MCF 10A (cell line): ENCODE measurements at regions of chr11 and their contacts with region 1.

Region 1: GRCh38 chr11:86511086-86511551 is 136.4 kb downstream of the CCDC81 start:
- DNase-seq: peak; percentile 74
- H3K4me3 Mint-ChIP-seq: no peak overlapping the region
- H3K27ac Mint-ChIP-seq: no peak overlapping the region
- H3K4me1 Mint-ChIP-seq: peaks cover 8% of the 10 kb centered on the region
- H3K27me3 Mint-ChIP-seq: no peaks in the 10 kb centered on the region
- CTCF ChIP-seq: no peak

Region 2: GRCh38 chr11:86537541-86538222 is 26.6 kb after region 1 on chr11:
- CTCF ChIA-PET with region 1: no interaction called
- POLR2A ChIA-PET with region 1: no interaction called
- intact Hi-C with region 1: no loop called
- DNase-seq: no peak
- H3K4me3 Mint-ChIP-seq: no peak overlapping the region
- H3K27ac Mint-ChIP-seq: no peak overlapping the region
- H3K4me1 Mint-ChIP-seq: no peaks in the 10 kb centered on the region
- H3K27me3 Mint-ChIP-seq: no peaks in the 10 kb centered on the region
- CTCF ChIP-seq: no peak

Region 3: GRCh38 chr11:86577663-86578636 is 66.8 kb after region 1 on chr11:
- CTCF ChIA-PET with region 1: no interaction called
- POLR2A ChIA-PET with region 1: no interaction called
- intact Hi-C with region 1: loop called (anchors 5 kb)
- DNase-seq: peak; percentile 92
- H3K4me3 Mint-ChIP-seq: peak overlapping the region; percentile 56
- H3K27ac Mint-ChIP-seq: no peak overlapping the region
- H3K4me1 Mint-ChIP-seq: peaks cover 22% of the 10 kb centered on the region
- H3K27me3 Mint-ChIP-seq: no peaks in the 10 kb centered on the region
- CTCF ChIP-seq: no peak

Region 4: GRCh38 chr11:87180742-87181141 is 669.6 kb after region 1 on chr11:
- CTCF ChIA-PET with region 1: no interaction called
- POLR2A ChIA-PET with region 1: no interaction called
- intact Hi-C with region 1: no loop called
- DNase-seq: peak; percentile 9
- H3K4me3 Mint-ChIP-seq: no peak overlapping the region
- H3K27ac Mint-ChIP-seq: no peak overlapping the region
- H3K4me1 Mint-ChIP-seq: peaks cover 8% of the 10 kb centered on the region
- H3K27me3 Mint-ChIP-seq: no peaks in the 10 kb centered on the region
- CTCF ChIP-seq: no peak